ENCODE measurements at regions of chr18 and their contacts with region 1.

Region 1: DNA sequence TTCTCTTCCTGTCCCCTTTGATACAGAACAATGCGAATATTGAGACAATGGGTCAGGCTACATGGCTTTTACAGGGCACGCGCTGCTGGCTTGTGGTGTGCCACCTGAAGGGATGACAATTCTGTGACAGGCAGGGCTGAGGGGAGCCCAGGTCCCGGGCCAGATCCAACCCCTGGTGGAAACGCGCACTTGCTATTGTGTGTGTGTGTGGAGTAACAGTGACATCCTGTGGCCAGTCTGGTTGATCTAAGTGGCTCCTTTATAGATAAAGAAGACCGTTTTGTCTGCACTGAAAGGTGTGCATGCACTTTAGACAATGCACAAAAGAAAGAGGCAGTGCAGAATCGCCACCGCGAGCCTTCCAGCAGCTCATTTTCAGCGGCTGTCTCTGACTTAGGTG is 273.6 kb downstream of the HRH4 start:
- ATAC-seq: peak; percentile 53 to 77 (median 69)
- H3K4me3 ChIP-seq: no peak overlapping the region
- H3K27ac ChIP-seq: no peak overlapping the region
- H3K4me1 ChIP-seq: peaks cover 0 to 5% of the 10 kb centered on the region in 2 donors

Region 2: DNA sequence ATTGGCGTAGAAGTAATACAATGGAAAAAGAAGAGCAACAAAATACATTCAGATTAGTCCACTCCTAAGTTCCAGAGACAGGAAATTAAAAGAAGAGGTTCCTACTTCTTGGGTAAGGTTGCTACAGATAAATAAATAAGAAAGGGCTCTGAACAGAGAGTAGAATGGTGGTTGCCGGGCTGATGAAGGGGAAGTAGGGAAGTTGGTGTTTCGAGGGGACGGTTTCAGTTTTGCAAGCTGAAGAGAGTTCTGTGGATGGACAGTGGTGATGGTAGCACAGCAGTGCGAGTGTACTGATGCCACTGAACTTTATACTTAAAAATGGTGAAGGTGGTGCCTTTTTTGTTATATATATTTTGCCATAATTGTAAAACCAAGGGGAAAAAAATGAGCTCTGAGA is 547.0 kb before region 1 on chr18:
- in situ Hi-C with region 1: no loop called
- ATAC-seq: no peak
- H3K4me3 ChIP-seq: no peak overlapping the region
- H3K27ac ChIP-seq: no peak overlapping the region
- H3K4me1 ChIP-seq: peaks cover 0 to 2% of the 10 kb centered on the region in 2 donors

Region 3: GRCh38 chr18:24368749-24369148 is 365.3 kb before region 1 on chr18:
- in situ Hi-C with region 1: loop called in 2 of 9 experiments (anchors 10 to 25 kb)
- ATAC-seq: no peak
- H3K4me3 ChIP-seq: no peak overlapping the region
- H3K27ac ChIP-seq: no peak overlapping the region
- H3K4me1 ChIP-seq: no peaks in the 10 kb centered on the region

Region 4: DNA sequence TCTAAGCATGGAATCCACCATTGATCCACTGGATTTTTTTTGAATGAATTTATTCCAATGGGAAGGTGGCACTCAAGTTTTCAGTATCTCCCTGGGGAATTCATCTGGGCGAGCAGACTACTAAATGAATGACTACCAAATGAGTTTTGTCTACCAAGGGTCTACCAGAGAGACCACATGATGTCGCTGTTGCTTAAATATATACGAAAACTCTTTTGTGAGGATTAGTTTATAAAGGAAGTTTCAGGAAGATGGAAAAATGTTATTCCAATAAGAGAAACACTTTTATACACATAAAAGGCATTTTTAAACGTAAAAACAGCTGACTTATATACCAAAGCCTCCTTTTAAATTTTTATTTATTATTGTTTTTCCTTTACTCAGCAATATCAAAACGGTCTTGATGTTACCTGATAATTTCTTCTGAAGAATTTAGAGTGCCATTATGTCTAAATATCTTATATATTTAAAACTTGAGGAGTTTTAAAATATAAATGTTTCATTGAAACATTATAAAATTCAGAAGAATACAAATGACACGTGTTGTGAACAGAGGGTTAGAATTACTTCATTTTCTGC is 133.9 kb before region 1 on chr18:
- in situ Hi-C with region 1: loop called in 5 of 9 experiments (anchors 10 to 25 kb)
- ATAC-seq: peak in 4 of 8 experiments; percentile 28 to 63 (median 50)
- H3K4me3 ChIP-seq: no peak overlapping the region
- H3K27ac ChIP-seq: no peak overlapping the region
- H3K4me1 ChIP-seq: peaks cover 2 to 30% of the 10 kb centered on the region in 2 donors

Region 5: DNA sequence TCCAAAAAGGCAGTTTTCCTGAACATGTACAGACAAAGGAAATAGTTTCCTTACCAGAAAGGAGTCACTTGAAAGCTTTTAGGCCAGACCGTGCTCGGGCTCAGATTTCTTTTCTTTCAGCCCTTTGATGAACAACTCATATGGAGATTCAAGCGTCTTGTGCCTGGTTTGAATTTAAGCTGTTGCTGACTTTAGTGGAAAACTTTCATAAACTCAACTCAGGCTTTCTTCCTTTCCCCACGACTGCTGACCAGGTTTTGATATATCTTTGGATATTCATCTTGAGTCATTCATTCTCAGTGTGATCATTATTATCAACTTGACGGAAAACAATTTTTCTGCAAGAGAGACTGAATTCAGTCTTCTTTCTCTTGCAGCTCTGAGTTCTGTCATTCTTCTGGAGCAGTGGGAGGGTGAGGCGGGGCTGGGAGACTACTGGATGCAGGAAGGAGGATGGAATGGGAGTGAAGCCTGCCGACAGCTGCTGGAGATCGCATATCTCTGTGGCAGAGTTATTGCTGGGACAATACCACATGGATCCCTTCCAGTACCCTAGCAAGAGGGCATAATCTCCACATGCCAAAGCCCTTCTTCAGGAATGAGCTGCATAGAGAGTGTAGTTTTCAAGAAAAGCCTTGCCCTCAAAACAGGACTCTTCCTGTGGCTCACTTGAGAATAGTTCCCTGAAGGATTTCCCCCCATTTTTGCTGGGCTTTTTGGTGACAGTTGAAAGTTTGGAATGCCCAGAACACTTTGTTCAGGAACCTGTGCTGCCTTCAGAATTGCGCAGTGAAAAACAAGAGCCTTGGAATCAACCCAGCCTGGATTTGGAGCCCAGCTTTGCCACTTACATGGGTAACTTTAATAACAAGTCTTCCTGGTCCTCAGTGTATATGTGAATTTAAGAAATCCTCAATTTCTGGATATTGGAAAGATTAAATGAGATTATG is 253.5 kb after region 1 on chr18:
- in situ Hi-C with region 1: no loop called
- ATAC-seq: peak; percentile 37 to 88 (median 66)
- H3K4me3 ChIP-seq: no peak overlapping the region
- H3K27ac ChIP-seq: no peak overlapping the region
- H3K4me1 ChIP-seq: peaks cover 47% of the 10 kb centered on the region in 2 donors